CD4-positive, alpha-beta memory T cell (primary cell): ENCODE measurements at regions of chr5 and their contacts with region 1.

Region 1: DNA sequence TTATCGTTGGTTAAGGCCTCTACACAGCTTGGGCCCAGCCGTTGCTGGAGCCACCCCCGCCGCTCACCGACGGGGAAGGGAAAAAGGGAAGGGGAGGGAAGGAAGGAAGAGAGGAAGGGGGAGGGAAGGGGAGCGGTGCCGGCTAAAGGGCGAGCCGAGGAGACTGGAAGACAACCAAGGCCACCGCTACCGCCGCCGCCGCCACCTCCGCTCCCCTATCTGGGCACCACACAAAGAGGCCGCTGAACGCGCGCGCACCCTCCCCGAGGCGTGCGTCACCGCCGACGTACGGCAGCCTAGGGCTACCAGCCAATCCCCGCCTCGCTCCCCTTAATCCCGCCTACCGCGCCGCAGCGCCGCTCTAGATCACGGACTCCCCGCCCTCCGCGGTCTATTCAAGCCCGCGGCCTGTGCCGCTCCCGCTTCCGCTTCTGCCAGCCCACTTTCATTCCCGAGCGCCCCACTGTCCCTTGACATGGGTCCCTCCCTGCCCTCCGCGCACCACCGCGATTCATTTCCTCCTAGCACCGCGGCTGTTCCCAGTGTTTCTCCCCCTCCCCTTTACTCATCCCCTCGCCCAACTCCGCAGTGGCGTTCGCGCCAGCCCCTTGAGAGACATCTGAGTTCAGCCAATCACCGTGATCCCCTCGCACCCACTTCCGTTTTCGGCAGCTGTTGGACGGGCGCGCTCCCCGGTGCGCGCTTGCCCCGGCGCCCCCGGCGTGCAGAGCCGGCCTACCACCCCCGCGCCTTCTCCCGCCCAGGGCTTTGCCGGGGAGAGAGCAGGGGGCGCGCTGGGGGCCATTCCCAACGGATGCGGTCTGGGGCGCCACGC is at the start of gene HNRNPA0:
- DNase-seq: peak; percentile 98 to 99 (median 99)
- H3K4me3 ChIP-seq: peak within 1 kb of the TSS; percentile 49 to 96
- H3K4me3 Mint-ChIP-seq: peak within 1 kb of the TSS; percentile 98 to 100 (median 99)
- H3K27ac ChIP-seq: peak within 1 kb of the TSS; percentile 100
- H3K27ac Mint-ChIP-seq: peak within 1 kb of the TSS; percentile 100
- H3K4me1 ChIP-seq: peaks cover 33% of the 10 kb centered on the region
- H3K4me1 Mint-ChIP-seq: peaks cover 26 to 54% (median 34%) of the 10 kb centered on the region in 4 donors
- H3K27me3 ChIP-seq: no peaks in the 10 kb centered on the region
- H3K27me3 Mint-ChIP-seq: peaks cover 0 to 9% of the 10 kb centered on the region in 2 donors
- total RNA-seq, gene HNRNPA0: 30.5 to 30.7 TPM

Region 2: GRCh38 chr5:137695651-137696428 is 58.5 kb before region 1 on chr5:
- CTCF ChIA-PET with region 1: interaction called, 12 read pairs
- POLR2A ChIA-PET with region 1: interaction called, 64 read pairs
- intact Hi-C with region 1: no loop called
- DNase-seq: peak; percentile 42 to 66 (median 52)
- H3K4me3 ChIP-seq: peak overlapping the region in 1 of 2 donors; percentile 9
- H3K4me3 Mint-ChIP-seq: peak overlapping the region; percentile 69 to 89 (median 81)
- H3K27ac ChIP-seq: peak overlapping the region; percentile 4
- H3K27ac Mint-ChIP-seq: peak overlapping the region; percentile 86 to 96 (median 92)
- H3K4me1 ChIP-seq: peaks cover 47% of the 10 kb centered on the region
- H3K4me1 Mint-ChIP-seq: peaks cover 34 to 68% (median 56%) of the 10 kb centered on the region in 4 donors
- H3K27me3 ChIP-seq: no peaks in the 10 kb centered on the region
- H3K27me3 Mint-ChIP-seq: no peaks in the 10 kb centered on the region

Region 3: GRCh38 chr5:137888857-137889759 is 134.8 kb after region 1 on chr5 and contains the start of gene PKD2L2:
- CTCF ChIA-PET with region 1: interaction called, 9 read pairs
- POLR2A ChIA-PET with region 1: interaction called, 13 read pairs
- intact Hi-C with region 1: loop called (anchors 5 kb)
- DNase-seq: peak; percentile 70 to 83 (median 81)
- H3K4me3 ChIP-seq: peak within 1 kb of the TSS; percentile 48 to 67
- H3K4me3 Mint-ChIP-seq: peak within 1 kb of the TSS; percentile 81 to 93 (median 88)
- H3K27ac ChIP-seq: peak within 1 kb of the TSS; percentile 71
- H3K27ac Mint-ChIP-seq: peak within 1 kb of the TSS; percentile 85 to 96 (median 92)
- H3K4me1 ChIP-seq: peaks cover 19% of the 10 kb centered on the region
- H3K4me1 Mint-ChIP-seq: peaks cover 13 to 20% (median 17%) of the 10 kb centered on the region in 4 donors
- H3K27me3 ChIP-seq: no peaks in the 10 kb centered on the region
- H3K27me3 Mint-ChIP-seq: no peaks in the 10 kb centered on the region
- total RNA-seq, gene PKD2L2: not detected

Region 4: DNA sequence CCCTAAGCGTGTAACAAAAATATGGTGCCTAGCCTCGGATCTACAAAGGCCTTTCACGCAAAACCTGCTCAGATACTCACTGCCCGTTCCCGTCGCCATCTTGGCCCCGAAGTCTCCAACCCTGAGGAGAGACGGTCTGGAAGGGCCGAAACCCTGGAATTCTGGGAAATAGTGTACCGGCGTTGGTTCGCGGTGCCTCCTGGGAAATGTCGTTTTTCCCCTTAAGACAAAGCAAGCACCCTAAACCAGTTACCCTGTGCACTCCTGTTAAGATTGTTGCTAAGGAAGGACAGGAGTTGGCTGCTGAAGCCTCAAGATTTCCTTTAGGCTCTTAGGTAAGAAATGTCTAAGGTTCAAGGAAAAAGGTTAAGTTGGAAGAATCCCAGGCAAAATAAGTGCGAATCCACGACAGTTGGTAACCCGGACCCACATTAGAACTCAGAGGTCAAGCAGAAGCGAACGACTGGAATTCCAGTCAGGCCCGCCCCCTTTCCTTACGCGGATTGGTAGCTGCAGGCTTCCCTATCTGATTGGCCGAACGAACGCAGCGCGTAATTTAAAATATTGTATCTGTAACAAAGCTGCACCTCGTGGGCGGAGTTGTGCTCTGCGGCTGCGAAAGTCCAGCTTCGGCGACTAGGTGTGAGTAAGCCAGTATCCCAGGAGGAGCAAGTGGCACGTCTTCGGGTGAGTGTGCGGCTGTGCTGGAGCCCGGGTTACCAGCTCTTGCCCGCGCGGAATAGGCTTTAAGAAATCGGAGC is 424.4 kb after region 1 on chr5 and contains the starts of genes BRD8 and KIF20A:
- CTCF ChIA-PET with region 1: interaction called, 3 read pairs
- POLR2A ChIA-PET with region 1: interaction called, 3 read pairs
- intact Hi-C with region 1: loop called (anchors 1 kb)
- DNase-seq: peak; percentile 85 to 92 (median 88)
- H3K4me3 ChIP-seq: peak within 1 kb of the TSS; percentile 80 to 93
- H3K4me3 Mint-ChIP-seq: peak within 1 kb of the TSS in 1 of 8 donors; percentile 9
- H3K27ac ChIP-seq: peak within 1 kb of the TSS; percentile 72
- H3K27ac Mint-ChIP-seq: peak within 1 kb of the TSS in 2 of 7 donors; percentile 16 to 55
- H3K4me1 ChIP-seq: peaks cover 17% of the 10 kb centered on the region
- H3K4me1 Mint-ChIP-seq: peaks cover 4 to 17% (median 11%) of the 10 kb centered on the region in 4 donors
- H3K27me3 ChIP-seq: no peaks in the 10 kb centered on the region
- H3K27me3 Mint-ChIP-seq: no peaks in the 10 kb centered on the region
- total RNA-seq, gene BRD8: 93.7 to 97.3 TPM
- total RNA-seq, gene KIF20A: not detected